ENCODE measurements at regions of chr17 and their contacts with region 1.

Region 1: DNA sequence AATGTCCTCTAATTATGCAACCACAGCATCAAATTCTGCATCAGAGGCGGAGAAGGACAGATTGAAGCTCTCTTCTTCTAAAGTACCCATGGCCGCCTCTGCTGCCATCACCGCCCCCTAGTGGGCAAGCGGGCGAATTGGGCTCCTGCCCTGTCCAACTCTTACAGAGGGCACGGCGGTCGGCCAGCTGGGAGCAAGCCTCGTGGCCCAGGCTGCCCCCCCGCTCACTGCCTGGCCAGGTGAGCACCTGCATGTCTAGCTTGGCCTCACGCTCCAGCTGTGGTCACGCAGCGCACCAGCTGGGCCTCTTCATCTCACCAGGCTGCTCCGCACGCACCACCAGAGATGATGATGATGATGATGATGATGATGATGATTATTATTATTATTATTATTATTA is 146.1 kb upstream of the TOM1L1 start:
- DNase-seq: no peak
- ATAC-seq: no peak
- H3K4me3 ChIP-seq: no peak overlapping the region
- H3K27ac ChIP-seq: no peak overlapping the region
- H3K4me1 ChIP-seq: no peaks in the 10 kb centered on the region
- H3K27me3 ChIP-seq: no peaks in the 10 kb centered on the region
- CTCF ChIP-seq: no peak
- POLR2A ChIP-seq: no peak

Region 2: GRCh38 chr17:54864636-54865356 is 110.2 kb after region 1 on chr17:
- in situ Hi-C with region 1: loop called in 1 of 4 experiments (anchors 25 kb)
- intact Hi-C with region 1: no loop called
- DNase-seq: no peak
- ATAC-seq: no peak
- H3K4me3 ChIP-seq: no peak overlapping the region
- H3K27ac ChIP-seq: no peak overlapping the region
- H3K4me1 ChIP-seq: no peaks in the 10 kb centered on the region
- H3K27me3 ChIP-seq: no peaks in the 10 kb centered on the region
- CTCF ChIP-seq: no peak
- POLR2A ChIP-seq: no peak